ENCODE measurements at regions of chr2 and their contacts with region 1.

Region 1: DNA sequence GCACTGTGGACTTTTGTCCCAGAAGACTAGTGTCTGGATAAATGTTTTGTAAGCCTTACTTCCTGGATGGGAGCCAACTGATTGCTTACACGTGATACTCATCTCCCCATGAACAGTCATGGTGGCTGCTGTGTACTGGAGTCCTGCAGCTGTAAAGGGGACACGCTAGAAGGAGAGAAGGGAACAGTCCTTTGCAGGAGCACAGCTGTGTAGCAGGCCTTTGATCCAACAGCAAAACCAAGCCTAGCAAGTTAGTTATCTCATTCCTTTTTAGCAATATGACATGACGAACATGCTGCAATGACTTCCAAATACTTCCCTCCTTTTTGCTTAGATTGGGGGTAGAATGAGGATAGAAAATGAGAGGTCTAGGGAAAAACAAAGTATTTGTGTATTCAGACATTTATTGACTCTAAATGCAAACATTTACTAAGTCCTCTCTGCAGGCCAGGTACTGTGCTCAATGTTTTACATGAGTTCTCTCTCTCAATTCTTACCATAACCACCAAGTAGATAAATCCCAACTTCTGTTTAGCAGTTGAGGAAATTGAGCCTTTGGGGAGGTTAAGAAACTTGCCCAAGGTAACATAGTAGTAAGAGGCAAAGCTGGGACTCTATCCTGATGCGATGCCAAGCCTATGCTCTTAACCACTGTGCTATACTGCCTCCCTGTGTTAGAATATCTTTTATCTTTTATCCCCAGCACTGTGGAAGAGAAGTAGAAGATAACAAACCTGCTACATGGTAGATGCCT is 55.4 kb upstream of the CD28 start:
- DNase-seq: peak; percentile 37
- ATAC-seq: peak; percentile 88
- H3K4me3 ChIP-seq: no peak overlapping the region
- H3K27ac ChIP-seq: no peak overlapping the region
- H3K4me1 ChIP-seq: peaks cover 0 to 9% of the 10 kb centered on the region in 2 experiments; a peak in 3 of 4 replicates
- H3K27me3 ChIP-seq: no peaks in the 10 kb centered on the region
- CTCF ChIP-seq: peak; percentile 14 to 74 (median 60); a peak in 5 of 6 replicates
- POLR2A ChIP-seq: no peak
- RAD21 ChIP-seq: peak; percentile 90

Region 2: GRCh38 chr2:202831242-202832220 is 819.5 kb before region 1 on chr2:
- CTCF ChIA-PET with region 1: no interaction called
- POLR2A ChIA-PET with region 1: no interaction called
- RAD21 ChIA-PET with region 1: no interaction called
- intact Hi-C with region 1: loop called (anchors 10 kb)
- DNase-seq: peak; percentile 61
- ATAC-seq: peak; percentile 98
- H3K4me3 ChIP-seq: peak overlapping the region in 1 of 2 experiments; percentile 9; a peak in 1 of 4 replicates
- H3K27ac ChIP-seq: no peak overlapping the region
- H3K4me1 ChIP-seq: peaks cover 3 to 10% of the 10 kb centered on the region in 2 experiments; a peak in 3 of 4 replicates
- H3K27me3 ChIP-seq: no peaks in the 10 kb centered on the region
- CTCF ChIP-seq: peak; percentile 79 to 89 (median 82)
- POLR2A ChIP-seq: no peak
- RAD21 ChIP-seq: peak; percentile 96

Region 3: DNA sequence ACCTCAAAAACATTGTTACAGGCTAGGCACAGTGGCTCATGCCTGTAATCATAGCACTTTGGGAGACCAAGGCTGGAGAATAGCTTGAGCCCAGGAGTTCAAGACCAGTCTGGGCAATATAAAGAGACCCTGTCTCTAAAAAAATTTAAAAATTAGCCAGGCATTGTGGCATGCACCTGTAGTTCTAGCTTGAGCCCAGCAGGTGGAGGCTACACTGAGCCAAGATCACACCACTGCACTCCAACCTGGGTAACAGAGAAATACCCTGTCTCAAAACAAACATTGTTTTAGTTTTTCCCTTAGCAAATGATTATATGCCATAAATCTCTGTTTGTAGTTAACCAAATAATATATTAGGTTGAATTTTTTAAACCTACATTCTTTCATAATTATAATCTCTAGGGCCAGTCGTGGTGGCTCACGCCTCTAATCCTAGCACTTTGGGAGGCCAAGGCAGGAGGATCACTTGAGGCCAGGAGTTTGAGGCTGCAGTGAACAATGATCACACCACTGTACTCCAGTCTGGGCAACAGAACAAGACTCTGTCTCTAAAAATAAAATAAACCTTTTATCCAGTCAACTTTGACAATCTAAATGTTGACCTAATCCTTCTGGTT is 425.5 kb before region 1 on chr2:
- CTCF ChIA-PET with region 1: no interaction called
- POLR2A ChIA-PET with region 1: no interaction called
- RAD21 ChIA-PET with region 1: no interaction called
- intact Hi-C with region 1: loop called (anchors 5 kb)
- DNase-seq: peak; percentile 13
- ATAC-seq: peak; percentile 90
- H3K4me3 ChIP-seq: no peak overlapping the region
- H3K27ac ChIP-seq: no peak overlapping the region
- H3K4me1 ChIP-seq: no peaks in the 10 kb centered on the region
- H3K27me3 ChIP-seq: no peaks in the 10 kb centered on the region
- CTCF ChIP-seq: peak; percentile 56 to 82 (median 79); a peak in 5 of 6 replicates
- POLR2A ChIP-seq: no peak
- RAD21 ChIP-seq: peak; percentile 70

Region 4: GRCh38 chr2:203484266-203485112 is 166.5 kb before region 1 on chr2:
- CTCF ChIA-PET with region 1: interaction called, 5 read pairs
- POLR2A ChIA-PET with region 1: no interaction called
- RAD21 ChIA-PET with region 1: interaction called in 1 of 2 experiments, 3 read pairs
- intact Hi-C with region 1: loop called (anchors 1 kb)
- DNase-seq: no peak
- ATAC-seq: peak; percentile 89
- H3K4me3 ChIP-seq: no peak overlapping the region
- H3K27ac ChIP-seq: no peak overlapping the region
- H3K4me1 ChIP-seq: no peaks in the 10 kb centered on the region
- H3K27me3 ChIP-seq: no peaks in the 10 kb centered on the region
- CTCF ChIP-seq: peak; percentile 62 to 71 (median 67); a peak in 5 of 6 replicates
- POLR2A ChIP-seq: no peak
- RAD21 ChIP-seq: peak; percentile 90

Region 5: GRCh38 chr2:203599509-203599908 is 51.5 kb before region 1 on chr2:
- CTCF ChIA-PET with region 1: no interaction called
- POLR2A ChIA-PET with region 1: no interaction called
- RAD21 ChIA-PET with region 1: no interaction called
- intact Hi-C with region 1: no loop called
- DNase-seq: no peak
- ATAC-seq: no peak
- H3K4me3 ChIP-seq: no peak overlapping the region
- H3K27ac ChIP-seq: no peak overlapping the region
- H3K4me1 ChIP-seq: no peaks in the 10 kb centered on the region; a peak in 1 of 4 replicates
- H3K27me3 ChIP-seq: no peaks in the 10 kb centered on the region
- CTCF ChIP-seq: no peak
- POLR2A ChIP-seq: no peak
- RAD21 ChIP-seq: no peak

Region 6: GRCh38 chr2:203730076-203730729 is 79.2 kb after region 1 on chr2:
- CTCF ChIA-PET with region 1: no interaction called
- POLR2A ChIA-PET with region 1: no interaction called
- RAD21 ChIA-PET with region 1: no interaction called
- intact Hi-C with region 1: no loop called
- DNase-seq: no peak
- ATAC-seq: no peak
- H3K4me3 ChIP-seq: no peak overlapping the region
- H3K27ac ChIP-seq: no peak overlapping the region
- H3K4me1 ChIP-seq: no peaks in the 10 kb centered on the region
- H3K27me3 ChIP-seq: no peaks in the 10 kb centered on the region
- CTCF ChIP-seq: no peak
- POLR2A ChIP-seq: no peak
- RAD21 ChIP-seq: no peak

Region 7: GRCh38 chr2:204335451-204336058 is 684.5 kb after region 1 on chr2:
- CTCF ChIA-PET with region 1: no interaction called
- POLR2A ChIA-PET with region 1: no interaction called
- RAD21 ChIA-PET with region 1: no interaction called
- intact Hi-C with region 1: no loop called
- DNase-seq: no peak
- ATAC-seq: no peak
- H3K4me3 ChIP-seq: no peak overlapping the region
- H3K27ac ChIP-seq: no peak overlapping the region
- H3K4me1 ChIP-seq: peaks cover 0 to 5% of the 10 kb centered on the region in 2 experiments; a peak in 1 of 4 replicates
- H3K27me3 ChIP-seq: 0 out of 2 replicates have a peak, but pooled peaks cover 5% of the 10 kb centered on the region
- CTCF ChIP-seq: no peak
- POLR2A ChIP-seq: no peak
- RAD21 ChIP-seq: no peak

Measured in HCT116 (cell line).